CD4-positive, alpha-beta T cell (primary cell): ENCODE measurements at regions of chr19 and their contacts with region 1.

Region 1: DNA sequence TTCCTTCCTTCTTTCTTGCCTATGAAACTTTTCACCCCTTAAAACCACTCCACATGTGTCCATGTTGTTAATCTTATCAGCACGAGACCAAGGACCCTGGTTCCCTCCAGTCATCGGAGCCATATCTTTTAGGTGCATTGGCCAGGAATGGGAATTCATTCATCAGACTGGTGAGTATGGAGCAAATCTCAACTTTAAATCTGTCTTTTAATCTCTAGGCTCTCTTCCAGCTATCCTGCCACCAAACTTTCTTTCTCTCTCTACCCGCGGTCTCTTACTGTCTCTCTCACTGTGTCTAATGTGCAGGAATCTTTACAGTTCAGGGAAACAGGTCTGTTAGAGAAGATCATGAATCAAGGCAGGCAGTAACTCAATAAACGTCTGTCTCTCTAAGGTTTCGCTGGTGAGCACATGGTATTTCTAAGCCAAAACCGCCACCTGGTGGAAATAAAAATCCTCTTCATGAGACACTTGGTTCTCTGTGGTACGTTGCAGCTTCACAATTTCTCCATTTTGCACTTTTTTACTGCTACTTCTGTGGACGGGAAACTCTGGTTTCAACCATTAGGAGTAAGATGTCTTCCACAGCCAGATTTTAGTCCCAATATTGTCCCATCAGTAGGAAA is 16.1 kb downstream of the LGALS16 start:
- DNase-seq: peak in 10 of 14 experiments; percentile 19 to 81 (median 45)
- ATAC-seq: peak; percentile 83
- H3K4me3 ChIP-seq: no peak overlapping the region
- H3K4me3 Mint-ChIP-seq: no peak overlapping the region
- H3K27ac ChIP-seq: no peak overlapping the region
- H3K27ac Mint-ChIP-seq: peak overlapping the region; percentile 2
- H3K4me1 ChIP-seq: peaks cover 20% of the 10 kb centered on the region
- H3K4me1 Mint-ChIP-seq: peaks cover 26% of the 10 kb centered on the region
- H3K27me3 ChIP-seq: no peaks in the 10 kb centered on the region
- H3K27me3 Mint-ChIP-seq: peaks cover 11% of the 10 kb centered on the region
- CTCF ChIP-seq: peak; percentile 69

Region 2: GRCh38 chr19:39397360-39398296 is 274.2 kb before region 1 on chr19:
- CTCF ChIA-PET with region 1: no interaction called
- POLR2A ChIA-PET with region 1: no interaction called
- intact Hi-C with region 1: loop called in 1 of 2 experiments (anchors 1 kb)
- DNase-seq: peak; percentile 87 to 98 (median 94)
- ATAC-seq: peak; percentile 43
- H3K4me3 ChIP-seq: peak overlapping the region; percentile 31
- H3K4me3 Mint-ChIP-seq: peak overlapping the region; percentile 63
- H3K27ac ChIP-seq: peak overlapping the region; percentile 90 to 100
- H3K27ac Mint-ChIP-seq: peak overlapping the region; percentile 98
- H3K4me1 ChIP-seq: peaks cover 68% of the 10 kb centered on the region
- H3K4me1 Mint-ChIP-seq: peaks cover 54% of the 10 kb centered on the region
- H3K27me3 ChIP-seq: no peaks in the 10 kb centered on the region
- H3K27me3 Mint-ChIP-seq: no peaks in the 10 kb centered on the region
- CTCF ChIP-seq: peak; percentile 91

Region 3: DNA sequence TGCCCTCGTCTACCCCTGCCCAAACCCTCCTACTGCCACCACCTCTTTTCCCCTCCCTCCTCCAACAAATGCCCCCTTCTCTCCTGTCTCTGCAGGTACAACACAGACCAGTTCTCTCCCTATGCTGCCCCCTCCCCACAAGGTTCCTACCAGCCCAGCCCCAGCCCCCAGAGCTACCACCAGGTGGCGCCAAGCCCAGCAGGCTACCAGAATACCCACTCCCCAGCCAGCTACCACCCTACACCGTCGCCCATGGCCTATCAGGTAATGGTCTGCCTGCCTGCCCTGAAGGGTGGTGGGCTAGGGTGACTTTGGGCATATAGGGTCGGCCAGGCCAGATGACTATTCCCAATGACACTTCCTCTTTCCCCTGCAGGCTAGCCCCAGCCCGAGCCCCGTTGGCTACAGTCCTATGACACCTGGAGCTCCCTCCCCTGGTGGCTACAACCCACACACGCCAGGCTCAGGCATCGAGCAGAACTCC is 197.7 kb before region 1 on chr19:
- CTCF ChIA-PET with region 1: no interaction called
- POLR2A ChIA-PET with region 1: no interaction called
- intact Hi-C with region 1: loop called in 1 of 2 experiments (anchors 1 kb)
- DNase-seq: peak; percentile 65 to 85 (median 72)
- ATAC-seq: peak; percentile 85
- H3K4me3 ChIP-seq: no peak overlapping the region
- H3K4me3 Mint-ChIP-seq: no peak overlapping the region
- H3K27ac ChIP-seq: no peak overlapping the region
- H3K27ac Mint-ChIP-seq: peak overlapping the region; percentile 36
- H3K4me1 ChIP-seq: no peaks in the 10 kb centered on the region
- H3K4me1 Mint-ChIP-seq: no peaks in the 10 kb centered on the region
- H3K27me3 ChIP-seq: no peaks in the 10 kb centered on the region
- H3K27me3 Mint-ChIP-seq: no peaks in the 10 kb centered on the region
- CTCF ChIP-seq: peak; percentile 70

Region 4: DNA sequence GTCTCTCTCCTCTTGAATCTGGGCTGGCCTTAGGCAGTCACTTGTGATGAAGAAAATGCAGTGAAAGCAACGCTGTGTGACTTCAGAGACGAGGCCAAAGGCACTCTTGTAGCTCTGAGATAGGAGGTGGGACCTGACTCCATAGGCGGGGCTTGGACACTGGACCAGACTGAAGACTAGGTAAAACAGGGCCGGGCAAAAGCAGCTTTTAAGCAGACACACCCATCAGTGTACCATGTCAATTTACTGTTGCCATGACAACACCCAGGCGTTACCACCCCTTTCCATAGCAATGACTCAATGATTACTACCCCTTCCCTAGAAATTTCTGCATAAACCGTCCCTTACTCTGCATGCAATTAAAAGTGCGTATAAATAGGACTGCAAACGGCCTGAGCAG is 125.3 kb before region 1 on chr19:
- CTCF ChIA-PET with region 1: interaction called, 16 read pairs
- POLR2A ChIA-PET with region 1: interaction called, 10 read pairs
- intact Hi-C with region 1: loop called (anchors 1 kb)
- DNase-seq: no peak
- ATAC-seq: no peak
- H3K4me3 ChIP-seq: no peak overlapping the region
- H3K4me3 Mint-ChIP-seq: no peak overlapping the region
- H3K27ac ChIP-seq: no peak overlapping the region
- H3K27ac Mint-ChIP-seq: peak overlapping the region; percentile 47
- H3K4me1 ChIP-seq: peaks cover 38% of the 10 kb centered on the region
- H3K4me1 Mint-ChIP-seq: peaks cover 51% of the 10 kb centered on the region
- H3K27me3 ChIP-seq: no peaks in the 10 kb centered on the region
- H3K27me3 Mint-ChIP-seq: no peaks in the 10 kb centered on the region
- CTCF ChIP-seq: no peak

Region 5: DNA sequence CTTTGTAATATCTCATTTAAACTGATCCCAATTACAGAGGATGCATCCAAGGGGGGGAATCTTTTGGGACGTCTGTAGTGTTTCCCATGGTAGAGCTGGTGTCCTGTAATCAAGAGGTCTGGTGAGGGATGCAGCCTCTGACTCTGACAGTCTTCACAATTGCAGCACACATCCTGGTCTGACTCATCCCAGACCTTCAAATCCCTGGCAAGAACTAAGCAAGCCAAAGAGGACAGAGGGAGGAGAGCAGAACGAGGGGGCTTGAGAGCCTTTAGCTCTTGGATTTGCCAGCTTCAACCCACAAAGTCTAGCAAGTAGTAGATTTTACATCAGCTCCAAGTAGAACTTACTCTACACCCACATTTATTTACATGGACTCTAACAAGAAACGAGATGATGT is 279.8 kb after region 1 on chr19:
- CTCF ChIA-PET with region 1: no interaction called
- POLR2A ChIA-PET with region 1: no interaction called
- intact Hi-C with region 1: no loop called
- DNase-seq: peak in 2 of 14 experiments; percentile 26 to 27
- ATAC-seq: no peak
- H3K4me3 ChIP-seq: peak overlapping the region; percentile 6
- H3K4me3 Mint-ChIP-seq: peak overlapping the region; percentile 86
- H3K27ac ChIP-seq: peak overlapping the region; percentile 77 to 84
- H3K27ac Mint-ChIP-seq: peak overlapping the region; percentile 91
- H3K4me1 ChIP-seq: peaks cover 81% of the 10 kb centered on the region
- H3K4me1 Mint-ChIP-seq: peaks cover 93% of the 10 kb centered on the region
- H3K27me3 ChIP-seq: no peaks in the 10 kb centered on the region
- H3K27me3 Mint-ChIP-seq: no peaks in the 10 kb centered on the region
- CTCF ChIP-seq: no peak